ENCODE measurements at regions of chr6 and their contacts with region 1.

Region 1: GRCh38 chr6:147950623-147950987 is 392.0 kb upstream of the SASH1 start:
- DNase-seq: no peak
- H3K4me3 ChIP-seq: no peak overlapping the region
- CTCF ChIP-seq: no peak

Region 2: DNA sequence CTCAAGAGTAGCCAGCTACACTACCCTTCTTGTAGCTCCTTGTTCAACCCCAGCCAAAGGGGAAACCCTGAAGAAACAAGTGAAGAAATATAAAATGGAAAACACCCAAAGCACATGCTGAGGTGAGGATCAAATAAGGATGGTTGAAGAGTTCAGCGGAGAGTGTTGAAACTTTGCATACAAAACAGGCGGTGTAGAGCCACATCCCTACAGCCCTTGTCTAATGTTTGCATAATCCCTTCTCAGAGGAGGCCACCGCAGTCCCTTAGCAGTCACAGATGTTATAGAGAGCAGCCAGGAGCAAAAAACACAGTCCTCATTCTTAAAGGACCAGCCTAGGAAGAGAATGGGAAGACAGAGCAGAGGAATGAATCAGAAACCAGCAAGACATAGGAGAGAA is 41.4 kb after region 1 on chr6:
- in situ Hi-C with region 1: loop called (anchors 5 kb)
- DNase-seq: no peak
- H3K4me3 ChIP-seq: no peak overlapping the region
- CTCF ChIP-seq: no peak